Esophagus muscularis mucosa (tissue), 4 donors: ENCODE measurements at regions of chr13 and their contacts with region 1.

Region 1: DNA sequence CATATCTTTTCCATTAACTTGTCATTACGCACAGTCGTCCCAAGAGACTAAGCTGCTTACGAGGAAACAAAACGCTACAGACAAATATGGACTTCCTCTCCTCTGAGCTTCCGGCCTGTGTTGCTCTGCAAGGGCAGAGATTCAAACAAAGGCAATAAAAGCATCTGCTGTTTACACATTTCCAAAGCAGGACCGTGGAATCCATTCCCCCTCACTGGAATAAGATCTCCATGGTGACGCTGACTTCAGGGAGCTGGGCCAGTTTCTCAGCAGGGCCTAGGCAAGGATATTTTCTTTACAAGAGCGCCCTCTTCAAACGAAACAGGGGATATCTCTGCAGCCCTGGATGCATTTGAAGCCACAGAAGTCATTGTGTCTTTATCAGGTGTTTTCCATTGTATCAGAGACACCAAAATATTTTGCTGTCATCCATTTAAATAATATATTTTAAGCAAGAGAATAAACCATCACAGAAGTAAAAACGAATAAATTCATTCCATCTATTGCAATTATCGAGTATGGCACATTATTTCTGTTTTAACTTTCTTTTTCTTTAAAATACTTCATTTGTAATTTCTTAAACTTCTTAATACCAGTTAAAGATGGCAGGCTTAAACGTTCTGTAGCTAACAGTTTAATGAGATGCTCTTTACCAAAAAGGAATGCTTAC is 177.5 kb downstream of the DCLK1 start:
- DNase-seq: peak; percentile 93
- H3K4me3 ChIP-seq: no peak overlapping the region
- H3K27ac ChIP-seq: peak overlapping the region; percentile 5 to 66 (median 26)
- H3K4me1 ChIP-seq: peaks cover 7 to 54% (median 50%) of the 10 kb centered on the region in 4 donors
- H3K27me3 ChIP-seq: no peaks in the 10 kb centered on the region
- CTCF ChIP-seq: peak; percentile 52 to 67 (median 61)
- EP300 ChIP-seq: no peak
- POLR2A ChIP-seq: no peak

Region 2: DNA sequence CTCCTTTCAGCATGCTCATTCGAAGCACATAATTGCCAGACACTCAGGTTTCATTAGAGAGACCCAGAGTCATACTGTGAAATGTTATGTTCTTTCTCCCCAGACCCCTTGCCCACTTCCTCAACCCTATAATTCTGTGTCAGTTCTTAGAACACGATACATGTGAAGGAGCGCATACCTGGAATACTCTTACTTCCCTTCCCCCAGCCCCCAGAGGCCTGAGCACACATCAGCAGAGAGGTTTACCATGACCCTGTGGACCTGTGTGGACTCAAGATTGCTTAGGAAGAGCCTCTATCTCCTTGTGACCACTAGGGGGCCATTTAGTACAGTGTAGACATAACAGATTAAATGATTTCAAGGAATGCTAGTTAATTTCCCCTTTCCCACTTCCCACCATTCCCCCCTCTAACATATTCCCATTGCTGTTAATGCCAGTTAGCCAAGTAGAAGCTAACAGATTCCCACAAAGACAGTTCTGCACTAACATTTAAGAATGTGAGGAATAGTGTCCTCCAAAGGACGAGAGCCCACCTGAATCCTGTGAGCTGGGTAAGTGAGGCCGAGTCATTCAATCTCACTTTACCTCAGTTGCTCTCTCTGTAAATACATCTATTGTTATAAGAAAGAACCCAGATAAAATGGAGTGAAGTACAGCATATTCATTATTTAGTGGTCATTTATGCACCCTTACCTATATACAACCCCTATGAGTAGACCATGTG is 323.0 kb before region 1 on chr13:
- intact Hi-C with region 1: loop called (anchors 10 kb)
- DNase-seq: no peak
- H3K4me3 ChIP-seq: no peak overlapping the region
- H3K27ac ChIP-seq: no peak overlapping the region
- H3K4me1 ChIP-seq: no peaks in the 10 kb centered on the region
- H3K27me3 ChIP-seq: no peaks in the 10 kb centered on the region
- CTCF ChIP-seq: peak; percentile 64 to 74 (median 72)
- EP300 ChIP-seq: no peak
- POLR2A ChIP-seq: no peak

Region 3: GRCh38 chr13:35841060-35841521 is 112.6 kb before region 1 on chr13:
- intact Hi-C with region 1: loop called (anchors 5 kb)
- DNase-seq: no peak
- H3K4me3 ChIP-seq: no peak overlapping the region
- H3K27ac ChIP-seq: peak overlapping the region; percentile 22 to 64 (median 58)
- H3K4me1 ChIP-seq: peaks cover 10 to 22% (median 18%) of the 10 kb centered on the region in 4 donors
- H3K27me3 ChIP-seq: no peaks in the 10 kb centered on the region
- CTCF ChIP-seq: no peak
- EP300 ChIP-seq: no peak
- POLR2A ChIP-seq: no peak

Region 4: DNA sequence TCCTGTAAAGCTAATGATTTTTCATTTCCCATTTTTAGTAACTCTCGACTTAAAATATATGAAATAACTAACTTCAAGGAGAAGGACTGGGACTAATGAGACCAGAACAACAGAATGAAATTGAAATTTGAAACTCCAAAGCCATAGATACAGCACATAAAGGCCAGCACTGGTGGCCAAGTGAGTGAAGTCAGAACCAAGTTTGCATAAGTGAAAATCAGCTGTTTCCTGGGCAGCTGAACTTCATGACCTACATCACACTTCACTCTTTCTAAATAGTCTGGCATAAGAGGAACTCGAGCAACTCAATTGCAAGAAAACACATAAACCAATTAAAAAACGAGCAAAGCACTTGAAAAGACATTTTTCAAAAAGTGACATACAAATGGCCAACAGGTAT is 93.0 kb after region 1 on chr13:
- intact Hi-C with region 1: no loop called
- DNase-seq: no peak
- H3K4me3 ChIP-seq: no peak overlapping the region
- H3K27ac ChIP-seq: no peak overlapping the region
- H3K4me1 ChIP-seq: peaks cover 0 to 3% (median 0%) of the 10 kb centered on the region in 4 donors
- H3K27me3 ChIP-seq: no peaks in the 10 kb centered on the region
- CTCF ChIP-seq: no peak
- EP300 ChIP-seq: no peak
- POLR2A ChIP-seq: no peak